Mammary epithelial cell (primary cell): ENCODE measurements at regions of chr9 and their contacts with region 1.

Region 1: DNA sequence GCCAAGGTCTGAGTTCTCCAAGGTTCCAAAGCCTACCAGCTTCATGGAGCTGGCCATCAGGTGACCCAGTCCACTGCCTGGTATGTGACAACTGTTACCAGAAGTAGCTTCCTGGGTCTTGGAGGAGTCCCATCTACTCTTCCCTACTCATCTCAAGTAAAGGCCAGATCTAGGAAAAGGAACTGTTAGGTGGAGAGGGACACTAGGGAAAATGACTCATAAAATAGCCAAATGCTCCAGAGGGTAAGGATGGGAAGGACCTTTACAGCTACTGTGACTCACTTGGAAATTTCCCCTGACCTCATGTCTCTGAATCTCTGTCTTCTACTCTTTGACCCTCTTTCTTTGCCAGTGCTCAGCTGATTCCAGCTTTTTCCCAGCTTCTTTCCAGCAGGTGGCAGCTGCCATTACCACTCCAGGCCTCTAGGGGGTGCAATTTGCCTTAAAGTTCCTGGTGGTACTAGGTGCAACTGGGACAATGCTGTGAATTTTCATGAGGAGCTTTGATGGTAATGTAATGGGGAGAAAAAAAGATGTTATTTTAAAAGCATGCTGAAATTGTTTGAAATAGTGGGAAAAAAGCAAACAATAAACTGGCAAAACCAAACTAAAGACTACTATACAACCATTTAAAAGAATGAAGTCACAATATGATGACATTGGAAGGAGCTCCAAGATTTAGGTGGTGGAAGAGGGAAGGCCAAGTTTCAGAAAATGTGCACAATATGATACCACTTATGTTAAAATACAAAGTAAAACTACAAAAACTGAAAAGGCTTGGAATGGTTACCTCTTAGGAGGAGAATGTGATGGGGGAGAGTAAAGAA is 27.1 kb upstream of the MYORG start:
- DNase-seq: peak; percentile 45
- H3K4me3 ChIP-seq: no peak overlapping the region
- H3K27ac ChIP-seq: no peak overlapping the region
- H3K4me1 ChIP-seq: no peaks in the 10 kb centered on the region
- H3K27me3 ChIP-seq: no peaks in the 10 kb centered on the region
- CTCF ChIP-seq: peak; percentile 97 to 99

Region 2: GRCh38 chr9:34591248-34591916 is 187.6 kb after region 1 on chr9:
- CTCF ChIA-PET with region 1: interaction called, 13 read pairs
- dilution Hi-C with region 1: no loop called
- in situ Hi-C with region 1: no loop called
- intact Hi-C with region 1: loop called (anchors 1 kb)
- DNase-seq: peak; percentile 57
- H3K4me3 ChIP-seq: no peak overlapping the region
- H3K27ac ChIP-seq: no peak overlapping the region
- H3K4me1 ChIP-seq: peaks cover 14% of the 10 kb centered on the region
- H3K27me3 ChIP-seq: peaks cover 42% of the 10 kb centered on the region
- CTCF ChIP-seq: peak; percentile 79 to 89